Pancreas (tissue), 10 donors: ENCODE measurements at regions of chr11 and their contacts with region 1.

Region 1: DNA sequence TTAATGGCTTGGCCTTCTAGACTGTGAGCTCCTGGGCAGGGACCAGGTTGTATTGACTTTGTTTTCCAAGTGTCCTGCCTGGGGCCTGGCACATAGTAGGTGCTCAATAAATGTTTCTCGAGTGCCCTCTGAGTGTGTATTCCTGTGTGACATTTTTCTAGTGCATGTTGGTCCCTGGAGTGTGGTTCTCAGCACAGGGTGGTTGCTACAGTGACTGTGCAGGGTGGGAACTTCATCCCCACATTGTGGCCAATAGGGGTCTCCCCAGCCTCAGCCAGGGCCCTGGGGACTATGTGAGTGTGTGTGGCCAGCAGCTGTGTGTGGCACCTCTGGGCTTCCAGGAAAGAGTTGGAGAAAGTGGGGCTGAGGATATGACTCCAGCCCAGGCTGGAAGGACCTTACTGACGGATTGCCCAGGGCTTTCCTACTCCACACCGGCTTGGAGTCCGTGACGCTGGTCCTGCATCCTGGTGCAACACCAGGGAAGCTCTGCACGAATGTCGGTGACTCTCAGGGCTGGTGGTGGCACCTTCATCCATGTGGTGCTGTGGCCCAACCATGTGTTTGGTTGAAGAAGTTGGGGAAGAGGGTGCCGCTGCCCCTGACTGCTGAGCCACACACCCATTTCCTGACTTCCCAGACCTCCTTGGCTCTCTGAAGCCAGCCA is 9.0 kb upstream of the MARK2 start:
- DNase-seq: peak in 1 of 6 donors; percentile 43
- ATAC-seq: peak; percentile 35 to 83 (median 69)
- H3K4me3 ChIP-seq: no peak overlapping the region
- H3K27ac ChIP-seq: no peak overlapping the region
- H3K4me1 ChIP-seq: no peaks in the 10 kb centered on the region
- H3K27me3 ChIP-seq: no peaks in the 10 kb centered on the region
- CTCF ChIP-seq: no peak

Region 2: DNA sequence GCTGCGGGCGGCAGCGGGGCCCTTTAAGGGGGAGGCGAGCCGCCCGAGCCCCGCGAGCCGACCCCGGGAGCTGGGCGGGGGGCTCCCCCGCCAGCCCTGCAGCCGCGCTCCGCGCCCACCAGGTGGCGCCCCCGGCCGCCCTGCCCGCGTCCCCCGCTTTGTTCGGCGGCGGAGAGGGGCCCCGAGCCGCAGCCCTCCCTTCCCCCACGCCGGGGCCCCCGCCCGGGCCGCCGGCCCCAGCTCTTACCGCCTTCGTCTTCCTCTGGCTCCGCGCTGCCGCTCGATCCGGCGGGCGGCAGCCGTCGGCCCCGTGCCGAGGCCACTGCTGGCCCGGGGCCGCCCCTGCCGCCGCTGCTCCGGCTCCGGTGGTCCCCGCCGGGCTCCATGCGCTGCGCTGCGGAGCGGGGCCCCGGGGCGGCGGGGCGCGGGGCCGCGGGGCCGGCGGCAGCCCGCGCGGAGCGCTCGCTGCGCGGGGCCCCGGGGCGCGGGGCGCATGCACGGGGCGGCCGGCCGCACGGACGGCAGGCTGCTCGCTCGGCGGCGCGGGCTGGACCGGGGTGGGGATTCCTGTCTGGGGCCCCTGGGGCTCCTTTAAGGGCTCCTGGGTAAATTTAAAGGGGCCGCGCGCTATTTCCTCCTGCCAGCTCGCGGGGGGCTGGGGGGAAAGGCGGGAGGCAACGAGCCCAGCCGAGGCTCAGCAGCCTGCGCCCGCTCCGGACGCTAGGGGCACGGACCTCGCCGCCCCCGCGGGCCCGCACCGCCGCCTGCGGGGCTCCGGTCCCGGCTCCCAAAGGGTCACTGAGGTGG is 61.5 kb before region 1 on chr11 and contains the start of gene ZFTA:
- intact Hi-C with region 1: loop called in 2 of 3 experiments (anchors 10 kb)
- DNase-seq: peak; percentile 63 to 86 (median 74)
- ATAC-seq: peak; percentile 32 to 54 (median 38)
- H3K4me3 ChIP-seq: peak within 1 kb of the TSS; percentile 63 to 94 (median 86)
- H3K27ac ChIP-seq: peak within 1 kb of the TSS; percentile 35 to 69 (median 58)
- H3K4me1 ChIP-seq: peaks cover 0 to 3% (median 0%) of the 10 kb centered on the region in 3 donors
- H3K27me3 ChIP-seq: no peaks in the 10 kb centered on the region
- CTCF ChIP-seq: peak; percentile 14 to 62 (median 32)
- total RNA-seq, gene ZFTA: 4.3 to 11.3 (median 6.2) TPM

Region 3: GRCh38 chr11:63951779-63952536 is 122.0 kb after region 1 on chr11:
- intact Hi-C with region 1: loop called (anchors 5 to 10 kb)
- DNase-seq: no peak
- ATAC-seq: peak in 1 of 4 donors; percentile 24
- H3K4me3 ChIP-seq: no peak overlapping the region
- H3K27ac ChIP-seq: no peak overlapping the region
- H3K4me1 ChIP-seq: no peaks in the 10 kb centered on the region
- H3K27me3 ChIP-seq: no peaks in the 10 kb centered on the region
- CTCF ChIP-seq: no peak

Region 4: DNA sequence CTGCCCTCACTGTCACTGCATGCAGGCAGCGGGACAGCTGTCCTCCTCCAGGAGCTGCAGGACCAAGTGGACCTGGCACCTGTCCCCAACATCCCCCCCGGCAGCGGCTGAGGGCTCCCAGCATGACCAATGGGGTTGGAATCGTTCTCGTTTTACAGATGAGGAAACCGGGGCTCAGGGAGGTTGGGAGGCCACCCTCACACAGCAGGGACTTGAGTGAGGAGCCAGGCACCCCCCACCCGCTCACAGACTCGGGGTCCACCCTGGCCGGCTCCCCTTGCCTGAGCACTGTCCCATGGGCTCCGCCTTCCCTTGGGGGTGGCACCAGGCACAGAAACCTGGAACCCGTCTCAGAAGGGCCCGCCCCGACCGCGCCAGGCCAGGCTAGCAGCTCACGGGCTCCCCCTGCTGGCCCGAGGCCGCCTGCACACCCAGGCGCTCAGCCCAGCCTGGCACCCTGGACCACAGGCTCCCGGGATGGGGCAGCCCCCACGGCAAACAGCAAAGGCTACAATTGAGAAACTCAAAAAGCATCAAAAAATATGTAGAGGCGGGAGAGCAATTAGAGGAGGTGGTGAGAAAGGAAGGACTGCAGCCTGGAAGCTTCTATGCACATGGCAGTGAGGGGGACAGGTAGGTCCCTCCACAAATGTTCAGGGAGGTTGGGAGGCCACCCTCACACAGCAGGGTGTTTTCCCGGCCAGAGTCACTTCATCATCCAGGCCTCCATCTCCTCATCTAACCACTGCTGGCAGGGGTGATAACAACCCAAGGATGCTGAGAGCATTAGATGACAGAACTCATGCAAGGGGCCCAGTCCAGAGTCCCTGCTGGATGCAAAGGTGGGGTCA is 323.1 kb after region 1 on chr11:
- intact Hi-C with region 1: loop called in 2 of 3 experiments (anchors 10 kb)
- DNase-seq: peak; percentile 38 to 90 (median 74)
- ATAC-seq: peak; percentile 65 to 87 (median 80)
- H3K4me3 ChIP-seq: no peak overlapping the region
- H3K27ac ChIP-seq: no peak overlapping the region
- H3K4me1 ChIP-seq: peaks cover 14 to 19% (median 14%) of the 10 kb centered on the region in 3 donors
- H3K27me3 ChIP-seq: no peaks in the 10 kb centered on the region
- CTCF ChIP-seq: peak; percentile 98 to 100 (median 99)